ENCODE measurements at regions of chr12 and their contacts with region 1.

Region 1: DNA sequence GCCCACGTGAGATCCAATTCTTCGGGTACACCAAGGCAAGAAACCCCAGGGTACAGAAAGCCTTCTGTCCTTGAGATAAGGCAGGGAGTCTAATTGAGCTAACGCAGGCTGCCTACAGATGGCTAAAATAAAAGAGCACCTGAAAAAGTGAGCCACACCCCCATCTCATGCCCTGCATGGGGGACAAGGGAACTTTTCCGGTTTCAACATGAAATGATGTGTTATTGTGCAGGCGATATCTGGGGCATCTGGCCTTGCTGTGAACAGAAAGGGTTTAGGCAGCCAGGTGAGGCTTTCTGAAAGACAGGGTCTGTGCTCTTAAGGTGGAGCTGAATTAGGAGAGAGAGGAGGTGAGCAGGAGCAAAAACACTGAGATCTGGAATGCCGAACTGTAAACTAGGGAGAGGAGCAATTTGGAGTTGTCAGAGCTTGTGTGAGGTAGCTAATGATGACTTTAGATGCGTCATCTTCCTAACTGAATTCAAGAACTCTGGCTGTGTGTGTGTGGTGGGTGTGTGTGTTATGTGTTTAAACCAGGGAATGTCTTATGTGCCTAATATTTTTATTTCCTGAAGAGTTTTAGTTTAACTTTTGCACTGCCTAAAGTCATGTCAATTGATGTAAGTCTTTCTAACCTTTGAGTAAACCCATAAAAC is 20.1 kb upstream of the LDHB start:
- DNase-seq: no peak
- ATAC-seq: no peak
- H3K4me3 ChIP-seq: no peak overlapping the region
- H3K27ac ChIP-seq: no peak overlapping the region
- H3K4me1 ChIP-seq: no peaks in the 10 kb centered on the region
- H3K27me3 ChIP-seq: no peaks in the 10 kb centered on the region; a peak in 1 of 5 replicates
- CTCF ChIP-seq: no peak
- EP300 ChIP-seq: no peak
- POLR2A ChIP-seq: no peak
- RAD21 ChIP-seq: no peak

Region 2: DNA sequence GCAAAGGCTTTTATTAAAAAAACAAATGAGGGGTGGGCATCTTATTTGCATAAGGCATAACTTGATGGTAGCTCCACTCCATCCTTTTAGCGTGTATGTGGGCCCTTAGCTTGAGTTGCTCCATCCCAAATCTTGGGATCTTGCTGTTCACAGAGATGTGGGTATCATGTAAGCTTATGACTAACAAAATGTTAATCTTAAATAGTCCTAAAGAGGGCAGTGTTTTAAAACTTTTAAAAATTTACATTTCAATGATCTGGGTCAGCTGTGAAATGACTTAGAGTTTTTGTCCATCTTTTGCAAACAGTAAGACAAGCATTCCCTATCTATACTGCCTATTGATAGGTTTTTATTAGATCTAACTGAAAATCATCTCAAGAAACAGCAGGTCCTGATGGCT is 429.1 kb before region 1 on chr12:
- CTCF ChIA-PET with region 1: interaction called, 7 read pairs
- POLR2A ChIA-PET with region 1: no interaction called
- in situ Hi-C with region 1: no loop called
- intact Hi-C with region 1: loop called (anchors 1 kb)
- DNase-seq: no peak
- ATAC-seq: peak; percentile 46; the same call in 1 of the 3 replicates
- H3K4me3 ChIP-seq: no peak overlapping the region
- H3K27ac ChIP-seq: no peak overlapping the region
- H3K4me1 ChIP-seq: no peaks in the 10 kb centered on the region
- H3K27me3 ChIP-seq: no peaks in the 10 kb centered on the region
- CTCF ChIP-seq: 0 out of 2 replicates have a peak, but pooled peaks have one; percentile 7
- EP300 ChIP-seq: no peak
- POLR2A ChIP-seq: no peak
- RAD21 ChIP-seq: no peak

Region 3: GRCh38 chr12:21308785-21309184 is 369.0 kb before region 1 on chr12:
- CTCF ChIA-PET with region 1: interaction called, 6 read pairs
- POLR2A ChIA-PET with region 1: no interaction called
- in situ Hi-C with region 1: loop called (anchors 25 kb)
- intact Hi-C with region 1: loop called (anchors 1 kb)
- DNase-seq: no peak
- ATAC-seq: no peak
- H3K4me3 ChIP-seq: no peak overlapping the region
- H3K27ac ChIP-seq: no peak overlapping the region
- H3K4me1 ChIP-seq: no peaks in the 10 kb centered on the region
- H3K27me3 ChIP-seq: no peaks in the 10 kb centered on the region
- CTCF ChIP-seq: no peak
- EP300 ChIP-seq: no peak
- POLR2A ChIP-seq: no peak
- RAD21 ChIP-seq: no peak

Region 4: DNA sequence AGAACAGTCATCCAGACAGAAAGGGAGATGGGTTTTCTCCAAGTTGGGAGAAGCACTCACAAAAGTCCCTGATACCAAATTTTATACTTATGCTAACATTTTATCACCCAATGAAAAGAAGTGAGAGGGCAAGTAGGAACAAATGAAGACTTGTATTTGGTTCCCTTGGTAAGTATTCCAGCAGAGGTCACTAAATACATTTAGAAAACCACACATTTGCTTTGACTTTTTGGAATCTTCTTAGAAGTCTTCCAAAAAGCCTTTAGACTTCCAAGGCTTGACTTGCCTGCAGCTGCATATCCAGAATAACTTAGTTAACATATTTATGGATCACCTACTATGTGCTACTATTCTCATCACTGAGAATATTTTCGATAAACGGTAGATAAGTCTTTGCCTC is 70.0 kb before region 1 on chr12:
- CTCF ChIA-PET with region 1: interaction called, 3 read pairs
- POLR2A ChIA-PET with region 1: no interaction called
- in situ Hi-C with region 1: no loop called
- intact Hi-C with region 1: loop called (anchors 1 kb)
- DNase-seq: no peak
- ATAC-seq: no peak
- H3K4me3 ChIP-seq: no peak overlapping the region
- H3K27ac ChIP-seq: no peak overlapping the region
- H3K4me1 ChIP-seq: no peaks in the 10 kb centered on the region
- H3K27me3 ChIP-seq: no peaks in the 10 kb centered on the region
- CTCF ChIP-seq: 0 out of 2 replicates have a peak, but pooled peaks have one; percentile 24
- EP300 ChIP-seq: no peak
- POLR2A ChIP-seq: no peak
- RAD21 ChIP-seq: no peak

Measured in HepG2 (cell line).